CD4-positive, alpha-beta T cell (primary cell): ENCODE measurements at regions of chr21 and their contacts with region 1.

Region 1: GRCh38 chr21:32392880-32393676 is at the start of gene URB1:
- DNase-seq: peak; percentile 90 to 98 (median 95)
- ATAC-seq: peak; percentile 97
- H3K4me3 ChIP-seq: peak within 1 kb of the TSS; percentile 98
- H3K4me3 Mint-ChIP-seq: peak within 1 kb of the TSS; percentile 94
- H3K27ac ChIP-seq: peak within 1 kb of the TSS; percentile 60 to 64
- H3K27ac Mint-ChIP-seq: peak within 1 kb of the TSS; percentile 80
- H3K4me1 ChIP-seq: peaks cover 26% of the 10 kb centered on the region
- H3K4me1 Mint-ChIP-seq: peaks cover 52% of the 10 kb centered on the region
- H3K27me3 ChIP-seq: no peaks in the 10 kb centered on the region
- H3K27me3 Mint-ChIP-seq: peaks cover under 1% of the 10 kb centered on the region
- CTCF ChIP-seq: no peak
- total RNA-seq, gene URB1: 5.4 to 5.7 TPM

Region 2: DNA sequence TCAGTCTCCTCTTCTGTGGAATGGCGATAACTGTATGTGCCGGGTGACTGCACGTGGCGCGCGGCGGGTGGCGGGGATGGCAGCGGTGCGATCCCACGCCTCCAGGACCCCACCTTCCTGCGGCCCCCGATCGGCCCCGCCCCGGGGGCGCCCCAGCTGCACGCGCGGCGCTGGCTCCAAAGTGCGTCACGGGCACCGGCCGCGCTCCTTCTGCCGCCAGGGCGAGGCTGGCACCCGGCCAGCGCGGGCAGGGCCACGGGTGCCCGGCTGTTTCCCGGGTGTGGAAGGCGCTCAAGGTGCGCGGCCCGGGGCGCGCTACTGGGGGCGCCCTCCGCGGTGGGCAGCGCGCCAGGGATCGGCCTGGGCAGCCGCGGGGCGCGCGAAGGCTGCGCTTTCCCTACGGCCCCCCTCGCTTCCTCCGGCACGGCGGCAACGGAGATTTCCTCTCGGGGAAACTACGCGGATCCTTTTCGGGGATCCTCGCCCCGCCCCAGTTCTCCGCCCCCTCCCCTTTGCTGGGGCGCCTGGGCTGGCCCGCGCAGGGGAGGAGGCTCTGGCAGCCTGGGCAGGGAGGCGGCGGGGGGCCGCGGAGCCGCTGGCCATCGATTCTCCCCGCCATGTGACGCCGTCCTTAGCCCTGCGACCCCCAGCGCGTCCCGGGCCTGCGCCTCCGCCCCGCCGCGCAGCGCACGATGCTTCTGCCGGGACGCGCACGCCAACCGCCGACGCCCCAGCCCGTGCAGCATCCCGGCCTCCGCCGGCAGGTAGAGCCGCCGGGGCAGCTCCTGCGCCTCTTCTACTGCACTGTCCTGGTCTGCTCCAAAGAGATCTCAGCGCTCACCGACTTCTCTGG is 19.3 kb after region 1 on chr21 and contains the start of gene EVA1C:
- CTCF ChIA-PET with region 1: interaction called, 3 read pairs
- POLR2A ChIA-PET with region 1: interaction called, 26 read pairs
- intact Hi-C with region 1: loop called in 1 of 2 experiments (anchors 1 kb)
- DNase-seq: peak; percentile 54 to 92 (median 66)
- ATAC-seq: peak; percentile 62
- H3K4me3 ChIP-seq: peak within 1 kb of the TSS; percentile 96
- H3K4me3 Mint-ChIP-seq: peak within 1 kb of the TSS; percentile 97
- H3K27ac ChIP-seq: peak within 1 kb of the TSS; percentile 64 to 96
- H3K27ac Mint-ChIP-seq: peak within 1 kb of the TSS; percentile 97
- H3K4me1 ChIP-seq: peaks cover 31% of the 10 kb centered on the region
- H3K4me1 Mint-ChIP-seq: peaks cover 52% of the 10 kb centered on the region
- H3K27me3 ChIP-seq: no peaks in the 10 kb centered on the region
- H3K27me3 Mint-ChIP-seq: no peaks in the 10 kb centered on the region
- CTCF ChIP-seq: peak; percentile 17
- total RNA-seq, gene EVA1C: 11.1 to 12.7 TPM

Region 3: DNA sequence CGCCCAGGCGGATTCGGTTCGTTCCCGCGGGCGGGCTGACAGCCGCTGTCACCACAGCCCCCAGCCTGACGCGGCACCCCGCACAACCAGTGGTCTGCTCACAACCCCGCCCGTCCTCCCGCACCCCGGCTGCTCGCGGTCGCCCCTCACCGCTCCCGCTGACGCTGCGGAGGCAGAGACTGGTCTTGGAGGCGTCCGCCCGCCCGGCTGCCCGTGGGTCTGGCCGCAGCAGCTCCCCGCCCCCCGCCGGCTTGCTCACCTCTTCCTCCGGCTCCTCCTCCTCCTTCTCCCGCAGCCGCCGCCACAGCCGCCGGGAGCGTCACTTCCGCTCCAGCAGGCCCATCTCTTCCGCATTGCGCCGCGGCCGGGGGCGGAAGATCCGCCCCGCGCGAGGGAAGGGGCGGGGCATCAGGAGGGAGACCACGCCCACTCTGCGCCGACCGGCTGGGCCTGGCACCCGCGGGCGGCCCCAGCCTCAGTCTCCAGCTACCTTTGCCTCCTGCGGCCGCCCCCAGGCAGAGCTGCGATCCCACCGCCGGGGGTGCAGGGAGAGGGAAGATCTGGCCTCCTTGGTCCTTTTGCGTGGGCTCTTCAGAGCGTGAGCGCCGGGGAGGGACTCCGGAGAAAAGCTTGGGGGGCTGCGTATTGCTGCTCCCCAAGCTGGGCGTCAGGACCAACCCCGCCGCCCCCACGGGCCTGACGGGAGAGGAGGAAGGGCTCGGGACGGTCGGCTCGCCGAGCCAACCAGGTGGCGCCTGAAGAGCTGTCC is 334.8 kb after region 1 on chr21 and contains the start of gene SYNJ1:
- CTCF ChIA-PET with region 1: no interaction called
- POLR2A ChIA-PET with region 1: interaction called, 4 read pairs
- intact Hi-C with region 1: loop called in 1 of 2 experiments (anchors 2 kb)
- DNase-seq: peak; percentile 85 to 97 (median 92)
- ATAC-seq: peak; percentile 85
- H3K4me3 ChIP-seq: peak within 1 kb of the TSS; percentile 95
- H3K4me3 Mint-ChIP-seq: peak within 1 kb of the TSS; percentile 97
- H3K27ac ChIP-seq: peak within 1 kb of the TSS; percentile 72 to 81
- H3K27ac Mint-ChIP-seq: peak within 1 kb of the TSS; percentile 90
- H3K4me1 ChIP-seq: peaks cover 27% of the 10 kb centered on the region
- H3K4me1 Mint-ChIP-seq: peaks cover 75% of the 10 kb centered on the region
- H3K27me3 ChIP-seq: no peaks in the 10 kb centered on the region
- H3K27me3 Mint-ChIP-seq: no peaks in the 10 kb centered on the region
- CTCF ChIP-seq: no peak
- total RNA-seq, gene SYNJ1: 14.3 to 15.6 TPM

Region 4: DNA sequence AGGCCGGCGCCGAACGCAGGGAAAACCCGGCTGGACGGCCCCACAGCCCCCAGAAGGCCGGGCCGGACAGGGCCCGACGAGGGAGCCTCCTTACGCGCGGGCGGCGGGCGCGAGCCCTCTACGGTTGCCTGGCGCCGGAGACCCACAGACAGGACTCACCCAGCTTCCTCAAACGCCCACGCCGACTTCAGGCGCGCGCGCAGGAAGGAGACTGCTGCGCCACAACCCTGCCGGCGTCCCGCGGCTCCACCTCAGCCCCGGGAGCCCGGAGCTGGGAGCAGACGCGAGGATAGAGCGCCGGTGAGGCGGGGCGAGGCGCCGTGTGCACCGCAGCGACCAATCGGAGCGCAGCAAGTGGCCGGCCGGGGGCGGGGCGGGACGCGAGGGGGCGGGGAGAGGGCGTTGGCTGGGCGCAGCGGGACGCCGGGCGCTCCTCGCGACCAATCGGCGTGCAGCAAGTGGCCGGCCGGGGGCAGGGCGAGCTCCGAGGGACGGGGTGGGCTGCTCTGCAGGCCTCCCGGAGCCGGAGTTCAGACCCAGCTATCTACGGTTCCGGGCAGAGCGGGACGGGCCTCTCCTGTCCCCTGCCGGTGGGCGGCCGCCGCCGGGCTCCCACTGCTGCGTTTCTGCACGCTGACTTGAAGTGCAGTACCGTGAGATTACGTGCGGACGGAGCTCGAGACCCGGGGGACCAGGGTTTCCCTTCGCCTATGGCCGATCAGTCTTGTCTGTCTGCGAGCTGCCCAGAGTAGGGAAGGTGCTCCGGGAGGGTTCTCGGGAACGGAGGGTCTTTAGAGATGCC is 1086.8 kb after region 1 on chr21 and contains the start of gene TMEM50B:
- CTCF ChIA-PET with region 1: no interaction called
- POLR2A ChIA-PET with region 1: no interaction called
- intact Hi-C with region 1: loop called in 1 of 2 experiments (anchors 10 kb)
- DNase-seq: peak; percentile 91 to 99 (median 96)
- ATAC-seq: peak; percentile 89
- H3K4me3 ChIP-seq: peak within 1 kb of the TSS; percentile 88
- H3K4me3 Mint-ChIP-seq: peak within 1 kb of the TSS; percentile 89
- H3K27ac ChIP-seq: peak within 1 kb of the TSS; percentile 80 to 90
- H3K27ac Mint-ChIP-seq: peak within 1 kb of the TSS; percentile 96
- H3K4me1 ChIP-seq: peaks cover 22% of the 10 kb centered on the region
- H3K4me1 Mint-ChIP-seq: peaks cover 19% of the 10 kb centered on the region
- H3K27me3 ChIP-seq: no peaks in the 10 kb centered on the region
- H3K27me3 Mint-ChIP-seq: no peaks in the 10 kb centered on the region
- CTCF ChIP-seq: peak; percentile 0
- total RNA-seq, gene TMEM50B: 38.4 to 40.3 TPM